ENCODE measurements at regions of chr10 and their contacts with region 1.

Region 1: DNA sequence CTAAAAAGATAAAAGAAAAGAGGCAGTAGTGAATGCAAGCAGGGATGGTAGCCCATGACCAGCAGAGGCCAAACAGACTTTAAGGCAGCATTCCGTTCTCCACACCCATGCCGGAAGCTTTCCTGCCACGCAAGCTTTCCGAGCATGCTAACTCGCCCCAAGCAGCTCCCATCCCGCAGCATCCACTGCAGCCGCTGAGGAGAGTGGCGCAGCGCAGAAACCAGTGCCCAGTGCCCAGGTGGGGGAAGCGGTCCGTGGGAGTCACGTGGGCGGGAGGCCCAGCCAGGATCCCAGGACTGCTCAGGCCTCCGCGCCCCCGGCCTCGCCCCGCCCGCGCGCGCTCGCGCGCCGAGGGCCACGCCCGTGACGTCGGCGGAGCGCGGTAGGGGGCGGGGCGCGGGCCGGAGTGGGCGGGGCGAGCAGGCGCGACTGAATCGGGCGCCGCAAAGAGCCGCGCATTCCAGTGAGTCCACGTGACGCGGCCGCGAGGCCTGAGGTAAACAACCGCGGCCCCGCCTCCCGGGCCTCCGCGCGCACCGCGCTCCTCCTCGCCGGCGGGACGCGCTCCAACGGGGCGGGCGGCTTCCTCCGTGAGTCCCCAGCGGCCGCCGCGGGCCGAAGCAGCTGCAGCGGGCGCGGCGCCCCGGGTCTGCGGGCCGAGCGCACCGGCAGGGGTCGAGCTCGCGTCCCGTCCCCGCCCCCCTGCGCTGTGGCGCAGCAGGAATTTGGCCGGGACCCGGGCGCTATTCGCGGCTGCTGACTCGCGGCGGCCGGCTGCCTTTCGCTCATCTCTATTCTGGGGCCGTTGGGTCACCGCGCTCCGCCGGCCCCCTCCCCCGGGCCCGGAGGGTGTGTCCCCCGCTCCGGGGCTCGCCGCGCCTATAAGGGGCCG is at the start of gene OTUD1:
- DNase-seq: peak; percentile 93
- H3K4me3 Mint-ChIP-seq: peak within 1 kb of the TSS; percentile 83
- H3K27ac Mint-ChIP-seq: peak within 1 kb of the TSS; percentile 83
- H3K4me1 Mint-ChIP-seq: peaks cover 20% of the 10 kb centered on the region
- H3K27me3 Mint-ChIP-seq: no peaks in the 10 kb centered on the region
- CTCF ChIP-seq: no peak
- total RNA-seq, gene OTUD1: 12.1 and 14.9 TPM in 2 replicates

Region 2: DNA sequence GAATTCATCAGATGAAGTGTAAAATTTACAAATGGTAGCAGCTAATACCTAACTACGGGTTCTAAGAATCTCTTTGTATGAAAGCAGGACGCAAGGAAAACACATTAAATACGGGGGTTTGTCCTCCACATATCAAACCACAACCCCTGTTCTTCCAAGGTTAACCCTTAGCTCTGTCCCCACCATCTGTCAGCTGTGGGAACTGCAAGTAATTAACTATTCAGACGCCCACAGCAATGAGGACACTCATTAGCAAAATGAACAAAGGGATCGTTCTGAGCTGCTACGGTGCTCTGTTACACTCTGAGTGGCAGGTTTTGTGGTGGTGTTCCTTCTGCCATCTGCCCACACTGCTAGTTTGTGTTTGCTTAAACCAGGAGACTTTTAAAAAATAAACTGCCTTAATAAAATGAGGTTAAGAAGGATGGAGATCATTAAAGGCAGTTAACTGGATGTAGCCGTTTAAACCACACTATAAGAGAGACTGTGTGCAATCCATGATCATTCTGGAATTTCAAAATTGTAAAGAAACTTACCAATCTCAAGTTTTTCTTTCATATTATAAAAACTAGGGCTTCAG is 145.6 kb before region 1 on chr10:
- CTCF ChIA-PET with region 1: interaction called, 10 read pairs
- POLR2A ChIA-PET with region 1: no interaction called
- intact Hi-C with region 1: no loop called
- DNase-seq: peak; percentile 69
- H3K4me3 Mint-ChIP-seq: no peak overlapping the region
- H3K27ac Mint-ChIP-seq: no peak overlapping the region
- H3K4me1 Mint-ChIP-seq: no peaks in the 10 kb centered on the region
- H3K27me3 Mint-ChIP-seq: peaks cover 30% of the 10 kb centered on the region
- CTCF ChIP-seq: peak; percentile 65

Region 3: DNA sequence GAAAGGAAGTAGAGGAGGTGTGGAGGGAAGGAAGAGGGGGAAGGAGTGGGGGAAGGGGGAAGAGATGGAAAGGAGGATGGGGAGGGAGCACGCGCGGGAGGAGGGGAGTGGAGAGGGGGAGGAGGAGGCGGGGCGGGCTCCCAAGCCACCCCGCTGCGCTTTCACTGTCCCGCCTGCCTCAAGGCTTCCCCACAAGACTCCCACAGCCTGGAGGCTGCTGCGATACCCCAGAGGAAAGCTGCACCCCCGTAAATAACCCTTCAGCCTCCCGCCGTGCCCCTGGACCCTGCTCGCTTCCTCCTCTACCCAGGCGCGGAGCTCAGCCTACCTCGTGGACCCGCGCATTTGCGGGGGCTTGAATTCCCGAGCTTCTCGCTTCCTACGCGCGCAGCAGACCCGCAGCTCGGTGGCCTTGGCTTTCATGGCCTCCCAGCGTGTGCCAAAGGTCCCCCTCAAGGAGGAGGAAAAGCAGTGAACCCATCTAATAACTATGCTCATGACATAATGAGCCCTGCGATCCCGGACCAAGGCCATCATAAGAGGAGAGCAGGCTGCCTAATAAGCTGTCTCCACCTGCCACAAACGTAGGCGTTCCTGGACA is 94.5 kb before region 1 on chr10 and contains the start of gene C10orf67:
- CTCF ChIA-PET with region 1: interaction called, 5 read pairs
- POLR2A ChIA-PET with region 1: interaction called, 32 read pairs
- intact Hi-C with region 1: no loop called
- DNase-seq: no peak
- H3K4me3 Mint-ChIP-seq: peak within 1 kb of the TSS; percentile 66
- H3K27ac Mint-ChIP-seq: peak within 1 kb of the TSS; percentile 31
- H3K4me1 Mint-ChIP-seq: peaks cover 20% of the 10 kb centered on the region
- H3K27me3 Mint-ChIP-seq: no peaks in the 10 kb centered on the region
- CTCF ChIP-seq: no peak
- total RNA-seq, gene C10orf67: 0.15 and 0.21 TPM in 2 replicates

Region 4: GRCh38 chr10:23383637-23384036 is 55.2 kb before region 1 on chr10:
- CTCF ChIA-PET with region 1: interaction called, 3 read pairs
- POLR2A ChIA-PET with region 1: interaction called, 23 read pairs
- intact Hi-C with region 1: no loop called
- DNase-seq: no peak
- H3K4me3 Mint-ChIP-seq: no peak overlapping the region
- H3K27ac Mint-ChIP-seq: peak overlapping the region; percentile 12
- H3K4me1 Mint-ChIP-seq: peaks cover 9% of the 10 kb centered on the region
- H3K27me3 Mint-ChIP-seq: no peaks in the 10 kb centered on the region
- CTCF ChIP-seq: no peak

Region 5: GRCh38 chr10:23525406-23525805 is 86.6 kb after region 1 on chr10:
- CTCF ChIA-PET with region 1: interaction called, 4 read pairs
- POLR2A ChIA-PET with region 1: no interaction called
- intact Hi-C with region 1: loop called (anchors 2 kb)
- DNase-seq: peak; percentile 61
- H3K4me3 Mint-ChIP-seq: no peak overlapping the region
- H3K27ac Mint-ChIP-seq: no peak overlapping the region
- H3K4me1 Mint-ChIP-seq: peaks cover 6% of the 10 kb centered on the region
- H3K27me3 Mint-ChIP-seq: no peaks in the 10 kb centered on the region
- CTCF ChIP-seq: peak; percentile 76

Measured in MCF 10A (cell line).